GM13976 (cell line): ENCODE measurements at regions of chr3 and their contacts with region 1.

Region 1: GRCh38 chr3:156382458-156383346 is 172.2 kb downstream of the SSR3 start:
- DNase-seq: peak; percentile 45
- CTCF ChIP-seq: peak; percentile 57

Region 2: GRCh38 chr3:156160647-156161046 is 222.1 kb before region 1 on chr3:
- in situ Hi-C with region 1: loop called (anchors 10 kb)
- DNase-seq: no peak
- CTCF ChIP-seq: no peak

Region 3: GRCh38 chr3:156997351-156997750 is 614.6 kb after region 1 on chr3:
- in situ Hi-C with region 1: no loop called
- DNase-seq: no peak
- CTCF ChIP-seq: no peak